Cardiac septum (tissue), 1 donor: ENCODE measurements at regions of chr11 and their contacts with region 1.

Region 1: GRCh38 chr11:9363954-9364912 is 20.2 kb upstream of the IPO7 start:
- DNase-seq: peak; percentile 98

Region 2: DNA sequence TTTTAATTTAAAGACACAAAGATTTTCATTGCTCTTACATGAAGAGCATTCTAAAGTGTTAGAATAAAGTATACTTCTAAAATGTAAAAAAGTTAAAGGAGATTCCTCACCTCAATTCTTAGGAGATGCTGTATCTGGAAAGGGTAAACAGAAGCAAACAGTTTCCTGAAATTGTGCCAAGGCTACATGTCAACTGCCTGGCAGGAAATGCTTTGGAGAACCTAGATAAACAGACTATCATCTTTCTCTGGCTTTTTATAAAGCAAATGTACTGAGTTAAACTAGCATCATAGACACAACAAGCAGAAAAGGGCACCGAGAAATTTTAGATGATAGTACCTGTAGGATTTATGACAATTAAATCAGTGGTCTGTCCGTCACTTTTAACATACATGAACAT is 477.9 kb before region 1 on chr11:
- intact Hi-C with region 1: no loop called
- DNase-seq: no peak

Region 3: DNA sequence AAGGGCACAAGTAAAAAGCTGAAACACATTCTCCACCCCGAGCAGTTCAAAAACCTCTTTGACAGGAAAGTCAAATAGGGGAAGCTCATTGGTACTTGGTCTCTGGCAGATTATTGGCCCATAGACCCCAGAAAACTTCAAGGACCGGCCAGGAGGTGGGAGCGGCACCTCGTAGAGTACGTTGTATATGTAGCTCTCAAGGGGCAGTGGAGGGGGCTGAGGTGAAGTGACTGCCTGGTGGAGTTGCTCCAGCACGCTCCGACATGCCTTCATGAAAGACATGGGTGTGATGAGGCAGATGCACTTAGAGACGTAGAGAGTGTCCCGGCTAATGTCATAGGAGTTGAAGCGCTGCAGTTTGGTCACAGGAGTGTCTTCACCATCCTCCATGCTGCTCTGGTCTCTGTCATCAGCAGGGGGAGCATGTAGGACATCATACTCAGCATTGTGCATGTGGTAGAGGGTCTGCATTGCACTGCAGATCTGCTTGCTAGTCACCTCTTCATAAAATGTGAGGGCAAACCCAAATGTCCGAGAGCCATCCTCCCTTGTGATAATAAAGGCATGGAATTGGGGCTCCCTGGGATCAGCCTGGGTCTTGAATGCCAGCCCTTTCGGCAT is 160.4 kb before region 1 on chr11:
- intact Hi-C with region 1: loop called (anchors 10 kb)
- DNase-seq: no peak

Region 4: DNA sequence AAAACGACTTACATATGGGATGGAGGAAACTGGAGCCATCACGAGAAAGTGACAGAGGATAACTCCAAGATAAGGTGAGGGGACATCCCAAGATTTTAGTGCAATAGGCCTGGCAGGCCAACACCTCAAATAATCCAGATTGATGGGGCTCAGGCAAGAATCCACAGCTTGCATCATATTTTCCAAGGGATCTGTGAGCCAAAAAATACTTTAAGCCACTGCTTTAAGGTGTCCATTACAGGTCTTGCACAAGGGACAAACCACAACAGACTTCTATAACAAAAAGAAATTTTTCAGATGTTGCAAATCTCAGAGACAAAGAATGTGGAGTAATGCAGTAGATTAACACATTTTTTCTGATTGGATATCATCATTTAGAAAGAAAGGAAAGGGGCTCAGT is 144.7 kb before region 1 on chr11:
- intact Hi-C with region 1: no loop called
- DNase-seq: no peak

Region 5: DNA sequence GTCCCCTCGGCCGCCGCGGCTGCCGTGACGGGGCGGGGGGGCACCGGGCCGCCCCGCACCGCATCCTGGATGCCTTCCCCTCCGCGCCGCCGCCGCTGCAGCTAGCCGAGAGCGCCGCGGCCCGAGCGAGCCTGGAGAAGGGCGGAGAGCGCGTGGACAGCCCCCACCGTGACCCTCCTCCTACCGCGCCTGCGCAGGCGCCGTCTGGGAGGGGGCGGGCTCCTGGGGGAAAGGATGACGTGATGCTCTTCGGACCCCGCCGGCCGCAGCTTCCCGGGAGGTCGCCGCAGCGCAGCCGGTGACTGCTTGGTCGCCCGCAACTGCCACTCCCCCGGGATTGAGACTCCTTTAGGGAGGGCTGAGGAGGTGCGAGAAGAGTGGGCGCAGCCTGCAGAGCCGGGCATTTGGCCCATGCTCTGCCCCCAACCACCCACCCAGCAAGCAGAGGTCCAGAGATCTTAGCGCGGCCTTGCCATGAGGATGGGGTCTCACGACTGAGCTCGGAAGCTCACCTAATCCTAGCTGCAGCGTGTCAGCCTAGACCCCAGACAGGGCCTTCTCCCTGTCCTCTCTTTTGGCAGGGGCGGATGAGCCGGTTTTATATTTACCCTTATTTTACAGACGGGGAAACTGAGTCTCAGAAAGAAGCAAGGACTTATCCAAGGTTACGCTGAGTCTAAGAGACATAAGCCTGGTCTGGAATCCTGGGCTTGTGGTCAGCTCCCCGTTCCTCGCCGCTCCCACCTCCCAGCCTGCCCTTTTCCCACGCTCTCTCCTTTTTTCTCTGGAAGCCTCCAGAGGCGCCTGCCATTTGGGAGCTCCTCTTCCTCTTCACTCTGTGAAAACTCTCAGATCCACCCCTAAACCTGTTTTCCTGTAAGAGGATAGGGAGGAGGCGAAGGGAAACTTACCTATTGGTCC is 98.8 kb before region 1 on chr11 and contains the start of gene DENND5A:
- intact Hi-C with region 1: loop called (anchors 5 kb)
- DNase-seq: peak; percentile 94
- total RNA-seq, gene DENND5A: 132 TPM

Region 6: DNA sequence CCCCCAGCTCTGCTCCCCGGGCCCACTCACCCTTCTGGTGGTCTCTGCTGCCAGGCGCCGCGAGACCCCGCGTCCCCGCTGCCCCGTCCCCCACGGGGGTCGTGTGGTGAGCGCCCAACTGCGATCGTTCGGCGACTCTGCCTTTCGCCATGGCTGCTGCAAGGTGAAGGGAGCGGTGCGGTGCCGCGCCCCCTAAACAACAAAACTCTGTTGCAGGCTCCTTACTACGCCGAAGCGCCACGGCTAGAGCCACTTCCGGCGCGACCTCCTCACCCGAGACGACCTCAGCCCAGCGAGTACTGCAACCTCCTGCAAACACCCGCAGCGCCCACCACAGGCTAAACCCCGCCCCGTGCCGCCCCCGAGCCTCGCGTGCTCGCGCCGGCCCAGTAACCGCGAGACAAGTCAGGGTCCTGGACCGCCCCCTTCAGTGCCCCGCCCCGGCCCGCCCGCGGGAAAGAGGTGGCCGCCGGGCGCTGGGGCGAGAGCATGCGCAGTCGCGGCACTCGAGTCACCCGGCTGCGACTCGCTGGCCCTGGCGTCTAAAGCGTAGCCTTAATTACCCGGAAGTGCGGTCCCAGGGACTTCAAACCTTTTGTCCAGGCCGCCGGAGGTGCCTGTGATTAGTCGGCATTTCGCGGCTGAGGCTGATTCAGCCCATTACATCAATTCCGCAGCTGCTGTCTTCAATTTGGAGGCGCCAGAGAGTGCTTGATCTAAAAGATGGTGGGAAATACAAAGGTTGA is 49.8 kb before region 1 on chr11 and contains the start of gene TMEM41B:
- intact Hi-C with region 1: loop called (anchors 1 kb)
- DNase-seq: peak; percentile 98
- total RNA-seq, gene TMEM41B: 18.2 TPM

Region 7: DNA sequence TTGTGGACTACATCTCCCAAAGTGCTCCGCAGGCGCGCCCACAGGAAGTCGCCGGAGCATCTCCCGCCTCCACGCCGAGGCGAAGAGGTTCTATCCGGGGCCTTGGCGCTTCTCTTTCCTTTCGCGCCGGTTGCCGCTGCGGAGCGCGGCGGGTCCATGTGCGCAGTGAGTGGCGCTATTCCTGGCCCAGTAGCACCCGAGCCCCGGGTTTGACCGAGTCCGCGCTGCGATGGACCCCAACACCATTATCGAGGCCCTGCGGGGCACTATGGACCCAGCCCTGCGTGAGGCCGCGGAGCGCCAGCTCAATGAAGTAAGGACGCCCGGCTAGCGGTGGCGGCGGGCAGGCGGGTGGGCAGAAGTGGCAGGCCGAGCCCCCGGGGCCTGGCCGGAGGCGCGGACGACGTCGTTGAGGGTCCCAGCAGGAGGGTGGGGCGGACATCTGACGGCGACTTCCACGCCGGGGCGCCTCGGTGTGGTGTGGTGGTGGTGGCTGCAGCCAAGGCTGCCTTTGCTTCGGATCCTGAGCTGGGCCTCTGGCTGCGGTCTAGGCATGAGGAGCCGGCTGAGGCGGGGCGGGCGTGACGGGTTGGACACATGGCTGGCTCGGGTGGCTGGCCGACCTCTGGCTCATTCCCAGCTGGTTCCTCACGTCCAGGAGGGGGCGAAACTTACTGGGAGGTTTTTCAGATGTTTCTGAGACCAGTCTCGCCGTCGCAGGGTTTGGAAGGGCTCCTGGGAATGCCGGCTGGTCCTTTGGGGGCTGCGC is 20.5 kb after region 1 on chr11 and contains the start of gene IPO7:
- intact Hi-C with region 1: loop called (anchors 2 kb)
- DNase-seq: peak; percentile 96
- total RNA-seq, gene IPO7: 143 TPM